ENCODE measurements at regions of chr2 and their contacts with region 1.

Region 1: DNA sequence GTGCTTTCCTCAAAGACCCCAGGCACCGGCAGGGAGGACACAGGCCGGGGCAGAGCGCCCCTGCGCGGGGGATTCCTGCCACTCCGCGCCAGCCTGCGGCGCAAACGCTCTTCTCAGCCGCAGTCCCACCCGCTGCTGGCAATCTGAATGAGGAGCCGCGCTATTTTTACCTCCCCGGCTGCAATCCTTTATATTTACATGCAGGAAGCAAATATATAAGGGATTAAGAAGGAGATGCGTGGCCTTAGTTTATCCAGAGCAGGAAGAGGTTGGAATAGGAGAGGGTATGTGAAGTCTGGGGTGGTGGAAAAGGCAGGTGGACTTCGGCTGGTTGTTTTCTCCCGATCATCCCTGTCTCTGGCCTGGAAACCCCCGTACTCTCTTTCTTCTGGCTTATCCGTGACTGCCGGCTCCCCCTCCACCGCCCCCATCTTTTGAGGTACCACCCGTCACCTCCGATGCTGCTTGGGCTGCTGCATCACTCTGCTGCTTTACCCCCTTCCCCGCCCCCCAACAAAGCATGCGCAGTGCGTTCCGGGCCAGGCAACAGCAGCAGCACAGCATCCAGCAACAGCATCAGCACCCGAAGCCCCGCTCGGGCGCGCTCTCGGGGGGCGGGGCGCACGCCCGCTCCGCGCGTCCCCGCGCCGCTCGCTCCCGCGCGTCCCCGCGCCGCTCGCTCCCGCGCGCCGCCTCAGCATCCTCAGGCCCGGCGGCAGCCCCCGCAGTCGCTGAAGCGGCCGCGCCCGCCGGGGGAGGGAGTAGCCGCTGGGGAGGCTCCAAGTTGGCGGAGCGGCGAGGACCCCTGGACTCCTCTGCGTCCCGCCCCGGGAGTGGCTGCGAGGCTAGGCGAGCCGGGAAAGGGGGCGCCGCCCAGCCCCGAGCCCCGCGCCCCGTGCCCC is at the start of gene ADAM23:
- ATAC-seq: peak; percentile 80 to 92 (median 88)
- H3K4me3 ChIP-seq: peak within 1 kb of the TSS; percentile 65 to 95 (median 76)
- H3K27ac ChIP-seq: peak within 1 kb of the TSS; percentile 65 to 66
- H3K4me1 ChIP-seq: peaks cover 21 to 40% of the 10 kb centered on the region in 2 donors
- total RNA-seq, gene ADAM23: 3.2 to 44.4 (median 16.6) TPM

Region 2: DNA sequence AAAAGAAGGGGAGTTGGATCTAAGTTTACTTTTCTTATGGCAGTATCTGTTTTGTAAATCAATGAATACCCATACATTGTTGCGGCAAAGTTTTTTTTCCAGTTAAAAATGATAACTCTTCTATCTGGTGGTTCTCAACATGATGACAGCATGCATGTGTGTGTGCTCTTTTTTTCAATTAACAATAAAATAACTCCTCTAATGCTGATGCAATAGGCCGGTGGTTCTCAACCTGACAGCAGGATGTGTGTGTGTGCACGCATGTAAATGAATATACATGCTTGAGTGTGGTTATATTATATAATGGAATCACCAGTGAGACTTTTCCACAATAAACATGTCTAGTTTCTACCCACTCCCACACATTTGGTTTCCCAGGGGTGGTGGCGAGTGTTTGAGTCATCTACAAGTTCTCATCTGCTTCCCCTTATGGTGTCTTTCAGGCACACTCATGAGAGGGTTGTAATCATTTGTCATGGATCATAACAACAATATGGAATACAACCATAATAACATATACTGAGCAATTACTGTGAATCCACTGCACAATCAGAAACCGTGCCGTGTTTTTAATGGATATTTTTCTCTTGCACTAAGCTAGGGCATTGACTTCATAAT is 1866.6 kb before region 1 on chr2:
- in situ Hi-C with region 1: no loop called
- ATAC-seq: peak in 3 of 8 experiments; percentile 45 to 69 (median 57)
- H3K4me3 ChIP-seq: no peak overlapping the region
- H3K27ac ChIP-seq: no peak overlapping the region
- H3K4me1 ChIP-seq: peaks cover 6% of the 10 kb centered on the region in 2 donors

Region 3: GRCh38 chr2:206198672-206199071 is 244.4 kb before region 1 on chr2:
- in situ Hi-C with region 1: loop called in 1 of 9 experiments (anchors 25 kb)
- ATAC-seq: peak in 3 of 8 experiments; percentile 62 to 98 (median 98)
- H3K4me3 ChIP-seq: no peak overlapping the region
- H3K27ac ChIP-seq: no peak overlapping the region
- H3K4me1 ChIP-seq: no peaks in the 10 kb centered on the region

Region 4: GRCh38 chr2:206783718-206784117 is 340.6 kb after region 1 on chr2:
- in situ Hi-C with region 1: loop called in 1 of 9 experiments (anchors 25 kb)
- ATAC-seq: peak in 2 of 8 experiments; percentile 29 to 49
- H3K4me3 ChIP-seq: no peak overlapping the region
- H3K27ac ChIP-seq: no peak overlapping the region
- H3K4me1 ChIP-seq: no peaks in the 10 kb centered on the region

Measured in motor neuron (in vitro differentiated cells).